ENCODE measurements at regions of chr1 and their contacts with region 1.

Region 1: DNA sequence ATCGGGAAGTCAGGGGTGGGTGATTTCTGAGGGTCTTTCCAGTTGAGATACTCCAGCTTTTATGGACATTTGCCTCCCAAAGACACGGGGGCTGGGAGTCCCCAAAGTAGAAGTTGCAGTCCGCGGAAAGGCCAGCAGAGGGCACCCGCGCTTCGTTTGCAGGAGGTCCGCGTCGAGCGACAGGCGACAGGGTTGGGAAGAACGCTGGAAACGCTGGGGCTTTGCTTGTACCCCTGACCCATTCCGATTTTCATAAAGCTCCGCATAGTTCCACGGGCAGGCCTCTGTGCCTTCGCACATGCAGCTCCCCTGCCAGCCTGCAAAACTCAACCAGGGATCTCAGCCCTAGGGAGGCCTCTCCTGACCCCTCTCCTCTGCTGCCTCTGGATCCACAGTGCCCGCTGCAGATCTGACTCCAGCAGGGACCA is 44.2 kb upstream of the LAPTM5 start:
- DNase-seq: peak; percentile 51
- H3K27ac ChIP-seq: no peak overlapping the region
- CTCF ChIP-seq: peak; percentile 94

Region 2: DNA sequence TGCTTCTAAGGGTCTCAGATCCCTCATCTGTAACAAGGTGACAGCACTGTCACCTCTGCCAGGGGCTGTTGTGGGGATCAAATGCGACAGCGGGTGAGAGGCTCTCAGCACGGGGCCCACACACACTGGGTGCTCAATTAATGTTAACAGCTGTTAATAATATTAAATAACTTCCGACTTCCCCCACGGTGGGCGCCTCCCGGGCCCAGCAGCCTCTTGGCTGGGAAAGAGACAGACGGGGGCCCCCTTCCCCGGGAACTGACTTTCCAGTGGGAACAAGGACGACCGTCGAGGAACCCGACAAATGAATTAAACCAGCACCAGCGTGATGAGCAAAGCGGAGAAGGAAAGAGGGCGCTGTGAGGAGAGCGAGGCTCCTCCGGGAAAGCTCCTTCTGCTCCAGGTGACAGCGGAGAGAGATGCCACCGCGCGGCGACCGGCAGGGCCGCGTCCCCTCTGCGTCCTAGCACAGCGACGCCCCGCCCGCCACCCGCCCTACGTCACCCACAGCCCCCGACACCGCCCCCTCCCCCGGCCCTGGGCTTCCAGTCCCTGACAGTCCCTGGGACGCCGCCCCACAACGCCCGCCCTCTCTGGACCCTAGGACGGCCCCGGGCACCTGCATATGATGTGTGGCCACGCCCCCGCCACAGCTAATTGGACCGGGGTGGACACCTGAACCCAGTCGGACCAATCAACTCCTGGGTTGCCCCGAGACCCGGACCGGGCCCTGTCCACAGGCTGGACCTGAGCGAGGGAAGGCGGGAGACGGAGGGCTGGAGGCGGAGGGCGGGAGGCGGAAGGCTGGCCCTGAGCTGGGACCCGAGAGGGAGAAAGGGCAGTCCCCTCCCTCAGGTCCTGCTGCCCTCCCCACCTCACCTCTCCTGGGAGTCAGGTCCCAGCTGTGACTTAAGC is 116.6 kb before region 1 on chr1:
- CTCF ChIA-PET with region 1: no interaction called
- POLR2A ChIA-PET with region 1: no interaction called
- DNase-seq: peak; percentile 48
- H3K27ac ChIP-seq: no peak overlapping the region
- CTCF ChIP-seq: no peak

Region 3: GRCh38 chr1:30779294-30780071 is 22.3 kb before region 1 on chr1:
- CTCF ChIA-PET with region 1: interaction called, 14 read pairs
- POLR2A ChIA-PET with region 1: no interaction called
- DNase-seq: peak; percentile 61
- H3K27ac ChIP-seq: no peak overlapping the region
- CTCF ChIP-seq: peak; percentile 92

Region 4: GRCh38 chr1:30816211-30817076 is 14.7 kb after region 1 on chr1:
- CTCF ChIA-PET with region 1: interaction called, 11 read pairs
- POLR2A ChIA-PET with region 1: no interaction called
- DNase-seq: peak; percentile 71
- H3K27ac ChIP-seq: peak overlapping the region; percentile 68
- CTCF ChIP-seq: no peak

Region 5: GRCh38 chr1:30902182-30902581 is 100.4 kb after region 1 on chr1:
- CTCF ChIA-PET with region 1: interaction called, 20 read pairs
- POLR2A ChIA-PET with region 1: no interaction called
- DNase-seq: no peak
- H3K27ac ChIP-seq: peak overlapping the region; percentile 70
- CTCF ChIP-seq: no peak

Region 6: DNA sequence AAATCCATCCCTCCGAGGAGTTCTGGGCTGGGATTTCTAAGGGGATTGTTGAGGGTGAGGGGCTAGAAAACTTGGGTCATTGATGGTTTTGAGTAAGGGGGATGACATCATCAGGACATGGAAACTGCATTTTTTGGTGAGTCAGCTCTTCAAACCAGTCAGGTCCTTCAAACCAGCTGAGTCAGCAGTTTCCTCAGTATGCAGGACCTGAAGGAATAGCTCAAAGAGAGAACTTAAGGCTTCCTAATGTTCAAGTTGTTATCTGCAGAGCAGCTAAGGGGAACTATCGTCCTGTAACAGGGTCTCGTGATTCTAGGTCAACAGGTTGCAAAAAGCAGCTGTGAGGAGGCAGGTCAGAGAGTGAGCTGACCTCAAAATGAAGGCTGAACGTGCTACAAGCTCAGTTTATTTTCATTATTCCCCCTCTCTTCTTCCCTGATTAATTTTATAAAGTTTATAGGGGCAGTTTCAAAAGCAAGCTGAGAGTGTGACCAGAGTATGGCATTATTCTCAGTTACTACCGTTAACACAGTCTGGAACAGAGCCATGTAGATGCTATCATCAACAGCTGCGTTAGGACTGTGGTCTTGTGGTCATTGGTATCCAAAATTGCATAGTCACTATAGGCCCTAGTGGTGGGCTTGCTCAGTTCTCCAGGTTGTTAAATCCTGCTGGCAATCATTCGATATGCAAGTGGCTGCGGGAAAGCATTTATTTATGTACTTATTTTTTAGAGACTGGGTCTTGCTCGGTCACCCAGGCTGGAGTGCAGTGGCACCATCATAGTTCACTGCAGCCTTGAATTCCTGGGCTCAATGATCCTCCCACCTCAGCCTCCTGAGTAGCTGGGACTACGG is 117.5 kb after region 1 on chr1:
- CTCF ChIA-PET with region 1: interaction called, 186 read pairs
- POLR2A ChIA-PET with region 1: no interaction called
- DNase-seq: no peak
- H3K27ac ChIP-seq: no peak overlapping the region
- CTCF ChIP-seq: no peak

Region 7: DNA sequence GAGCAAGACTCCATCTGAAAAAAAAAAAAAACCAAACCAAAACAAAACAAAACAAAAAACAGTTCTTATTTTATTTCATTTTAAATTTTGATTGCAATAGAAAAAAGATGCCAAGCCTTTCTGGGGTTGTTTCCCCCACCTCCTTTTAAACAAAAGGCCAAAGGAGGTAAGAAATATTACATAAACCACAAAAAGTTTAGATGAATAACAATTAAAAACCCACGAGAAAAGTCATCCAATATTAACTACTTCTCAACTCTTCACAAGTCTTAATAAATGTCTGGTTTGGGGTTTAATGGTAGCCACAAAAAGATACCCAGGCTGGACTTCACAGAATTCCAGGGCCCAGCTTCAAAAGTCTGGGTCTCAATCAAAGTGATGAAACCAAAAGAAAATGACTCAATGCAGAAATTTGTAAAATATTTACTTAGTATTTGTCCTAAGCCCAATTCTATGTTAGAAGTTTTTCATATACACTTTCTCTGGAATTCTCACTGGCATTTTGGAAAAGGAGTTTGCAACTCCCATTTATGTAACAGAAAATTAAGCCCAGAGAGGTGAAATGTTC is 153.7 kb after region 1 on chr1:
- CTCF ChIA-PET with region 1: no interaction called
- POLR2A ChIA-PET with region 1: no interaction called
- DNase-seq: no peak
- H3K27ac ChIP-seq: no peak overlapping the region
- CTCF ChIP-seq: no peak